Activated naive CD4-positive, alpha-beta T cell treated with anti-CD3 and anti-CD28 coated beads for 36 hours (primary cell): ENCODE measurements at regions of chr1 and their contacts with region 1.

Region 1: GRCh38 chr1:15617175-15617880 is at the start of gene DDI2:
- DNase-seq: peak; percentile 96
- H3K4me3 Mint-ChIP-seq: peak within 1 kb of the TSS; percentile 90
- H3K27ac Mint-ChIP-seq: peak within 1 kb of the TSS; percentile 93
- H3K4me1 Mint-ChIP-seq: peaks cover 42% of the 10 kb centered on the region
- H3K27me3 Mint-ChIP-seq: no peaks in the 10 kb centered on the region
- total RNA-seq, gene DDI2: 19.6 to 20.7 TPM

Region 2: DNA sequence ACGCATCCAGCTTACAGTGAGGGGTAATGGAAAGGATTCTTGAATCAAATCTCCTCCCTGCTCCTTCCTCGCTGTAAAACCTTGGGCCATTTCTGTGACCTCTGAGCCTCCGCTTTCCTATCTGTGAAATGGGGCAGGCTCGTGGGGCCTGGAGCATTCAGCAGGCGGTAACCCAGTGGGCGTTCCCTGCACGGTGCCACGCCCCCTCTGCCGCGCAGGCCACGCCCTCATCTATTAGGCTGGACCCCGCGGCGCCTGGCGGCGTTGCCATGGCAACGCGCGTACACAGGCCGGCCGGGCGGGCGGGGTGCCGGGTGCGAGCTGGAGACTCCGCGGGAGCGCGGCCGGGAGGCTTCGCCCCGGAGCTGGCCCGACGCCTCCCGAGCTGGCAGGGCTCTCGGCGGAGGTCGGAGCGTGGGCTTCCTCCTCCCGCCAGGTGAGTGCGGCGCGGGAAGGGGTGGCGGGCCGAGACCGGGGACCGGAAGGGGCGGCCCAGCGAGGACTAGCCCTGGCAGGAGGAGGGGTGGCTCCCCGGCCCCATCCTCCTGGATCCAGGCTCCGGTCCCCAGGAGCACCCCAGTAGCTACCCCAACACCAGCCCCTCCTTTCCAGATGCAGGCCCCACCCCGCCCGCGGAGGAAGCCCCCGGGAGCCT is 370.2 kb before region 1 on chr1 and contains the start of gene FHAD1:
- CTCF ChIA-PET with region 1: no interaction called
- intact Hi-C with region 1: loop called (anchors 5 kb)
- DNase-seq: peak; percentile 48
- H3K4me3 Mint-ChIP-seq: peak within 1 kb of the TSS; percentile 51
- H3K27ac Mint-ChIP-seq: peak within 1 kb of the TSS; percentile 59
- H3K4me1 Mint-ChIP-seq: peaks cover 66% of the 10 kb centered on the region
- H3K27me3 Mint-ChIP-seq: peaks cover 50% of the 10 kb centered on the region
- total RNA-seq, gene FHAD1: 0.45 TPM in 1 of 2 experiments, not detected in the other

Region 3: GRCh38 chr1:15578921-15579682 is 38.2 kb before region 1 on chr1:
- CTCF ChIA-PET with region 1: no interaction called
- intact Hi-C with region 1: loop called (anchors 1 kb)
- DNase-seq: peak; percentile 66
- H3K4me3 Mint-ChIP-seq: peak overlapping the region; percentile 51
- H3K27ac Mint-ChIP-seq: peak overlapping the region; percentile 92
- H3K4me1 Mint-ChIP-seq: peaks cover 55% of the 10 kb centered on the region
- H3K27me3 Mint-ChIP-seq: no peaks in the 10 kb centered on the region

Region 4: DNA sequence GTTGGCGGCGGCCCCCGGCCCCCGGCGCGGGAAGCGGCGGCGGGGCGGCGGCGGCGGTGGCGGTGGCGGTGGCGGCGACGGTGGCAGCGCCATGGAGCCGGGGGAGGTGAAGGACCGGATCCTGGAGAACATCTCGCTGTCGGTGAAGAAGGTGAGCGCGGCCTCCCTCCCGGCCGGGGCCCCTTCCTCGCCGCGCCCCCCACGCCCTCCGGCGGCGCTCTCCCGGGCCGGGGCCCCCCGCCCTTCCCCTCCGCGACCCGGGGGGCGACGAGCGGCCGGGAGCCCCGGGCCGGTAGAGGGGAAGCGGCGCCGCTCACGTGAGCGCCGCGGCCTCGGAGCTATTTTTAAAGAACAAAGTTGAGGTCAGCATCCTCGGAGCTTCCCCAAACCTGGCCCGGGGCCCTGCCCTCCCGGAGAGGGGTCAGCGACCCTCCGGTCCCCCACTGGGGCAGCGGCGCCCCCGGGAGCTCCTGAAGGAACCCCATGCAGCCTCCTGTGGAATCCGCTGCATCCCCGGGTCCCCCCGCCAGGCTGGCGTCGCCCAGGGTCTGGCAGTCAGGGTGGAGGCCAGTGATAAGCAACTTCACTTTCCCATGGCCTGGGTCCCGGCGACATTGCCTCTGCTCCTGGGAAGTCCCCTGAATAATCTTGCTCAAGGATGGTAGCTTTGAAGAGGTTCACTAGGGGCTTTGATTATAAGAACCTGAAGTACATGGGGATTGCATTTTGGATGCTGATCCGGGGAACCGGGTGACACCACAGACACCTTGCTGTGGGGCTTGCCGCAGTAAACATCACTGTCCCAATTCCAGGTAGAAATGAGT is 67.4 kb after region 1 on chr1:
- CTCF ChIA-PET with region 1: interaction called, 3 read pairs
- intact Hi-C with region 1: loop called (anchors 2 kb)
- DNase-seq: peak; percentile 61
- H3K4me3 Mint-ChIP-seq: peak overlapping the region; percentile 85
- H3K27ac Mint-ChIP-seq: peak overlapping the region; percentile 85
- H3K4me1 Mint-ChIP-seq: peaks cover 45% of the 10 kb centered on the region
- H3K27me3 Mint-ChIP-seq: no peaks in the 10 kb centered on the region

Region 5: DNA sequence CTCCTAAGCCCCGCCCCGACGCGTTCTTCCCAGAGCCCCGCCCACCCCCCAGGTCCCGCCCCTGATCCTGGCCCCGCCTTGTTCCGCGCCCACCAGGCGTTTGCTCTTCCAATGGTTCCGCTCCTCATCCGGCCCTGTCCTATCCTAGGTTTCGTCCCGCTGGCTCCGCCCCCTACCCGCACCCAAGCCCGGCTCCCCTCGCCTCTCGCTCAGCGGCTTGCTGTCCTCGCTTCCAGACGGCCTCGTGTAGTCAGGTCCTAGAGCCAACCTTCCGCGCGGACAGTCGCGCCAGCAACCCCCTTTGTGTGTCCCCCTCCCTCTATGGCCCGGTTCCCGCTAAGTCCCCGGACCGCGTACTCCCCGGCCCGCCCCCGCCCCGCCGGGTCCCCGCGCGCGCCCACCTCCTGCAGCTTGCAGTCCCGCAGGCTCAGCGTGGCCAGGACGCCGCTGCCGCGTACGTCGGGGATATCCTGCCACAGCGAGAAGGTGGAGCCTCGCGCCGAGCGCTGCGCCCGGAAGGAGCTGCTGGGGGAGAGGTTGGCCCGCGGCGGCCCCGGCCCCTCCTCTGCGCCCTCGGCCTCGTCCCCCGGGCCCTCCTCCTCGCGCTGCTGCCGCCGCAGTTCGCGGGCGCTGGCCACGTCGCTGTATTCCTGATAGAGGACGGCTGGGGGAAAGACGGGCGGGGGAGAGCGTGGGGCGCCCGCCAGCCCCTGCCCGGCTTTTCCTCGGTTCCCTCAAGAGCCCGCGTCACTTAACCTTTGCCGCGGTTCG is 589.4 kb after region 1 on chr1:
- CTCF ChIA-PET with region 1: no interaction called
- intact Hi-C with region 1: loop called (anchors 2 kb)
- DNase-seq: peak; percentile 95
- H3K4me3 Mint-ChIP-seq: peak overlapping the region; percentile 83
- H3K27ac Mint-ChIP-seq: peak overlapping the region; percentile 87
- H3K4me1 Mint-ChIP-seq: peaks cover 4% of the 10 kb centered on the region
- H3K27me3 Mint-ChIP-seq: no peaks in the 10 kb centered on the region